ENCODE measurements at regions of chr1 and their contacts with region 1.

Region 1: GRCh38 chr1:56709269-56709880 is 64.3 kb downstream of the PRKAA2 start:
- DNase-seq: no peak
- H3K4me3 ChIP-seq: no peak overlapping the region
- H3K27ac ChIP-seq: no peak overlapping the region
- H3K4me1 ChIP-seq: peaks cover 0 to 8% (median 0%) of the 10 kb centered on the region in 4 donors
- H3K27me3 ChIP-seq: no peaks in the 10 kb centered on the region
- CTCF ChIP-seq: peak; percentile 11 to 65 (median 42)
- EP300 ChIP-seq: no peak
- POLR2A ChIP-seq: no peak

Region 2: GRCh38 chr1:55284852-55285251 is 1424.5 kb before region 1 on chr1:
- intact Hi-C with region 1: loop called (anchors 2 kb)
- DNase-seq: peak; percentile 76
- H3K4me3 ChIP-seq: no peak overlapping the region
- H3K27ac ChIP-seq: no peak overlapping the region
- H3K4me1 ChIP-seq: no peaks in the 10 kb centered on the region
- H3K27me3 ChIP-seq: no peaks in the 10 kb centered on the region
- CTCF ChIP-seq: peak; percentile 53 to 70 (median 60)
- EP300 ChIP-seq: no peak
- POLR2A ChIP-seq: no peak

Measured in sigmoid colon (tissue), 7 donors.